ENCODE measurements at regions of chr16 and their contacts with region 1.

Region 1: GRCh38 chr16:67246934-67247697 is at the start of gene FHOD1:
- DNase-seq: peak; percentile 100
- ATAC-seq: peak; percentile 66
- H3K4me3 Mint-ChIP-seq: peak within 1 kb of the TSS; percentile 82
- H3K27ac Mint-ChIP-seq: peak within 1 kb of the TSS; percentile 90
- H3K4me1 Mint-ChIP-seq: peaks cover 43% of the 10 kb centered on the region
- H3K27me3 Mint-ChIP-seq: peaks cover 13% of the 10 kb centered on the region
- total RNA-seq, gene FHOD1: 92.2 to 92.8 TPM

Region 2: DNA sequence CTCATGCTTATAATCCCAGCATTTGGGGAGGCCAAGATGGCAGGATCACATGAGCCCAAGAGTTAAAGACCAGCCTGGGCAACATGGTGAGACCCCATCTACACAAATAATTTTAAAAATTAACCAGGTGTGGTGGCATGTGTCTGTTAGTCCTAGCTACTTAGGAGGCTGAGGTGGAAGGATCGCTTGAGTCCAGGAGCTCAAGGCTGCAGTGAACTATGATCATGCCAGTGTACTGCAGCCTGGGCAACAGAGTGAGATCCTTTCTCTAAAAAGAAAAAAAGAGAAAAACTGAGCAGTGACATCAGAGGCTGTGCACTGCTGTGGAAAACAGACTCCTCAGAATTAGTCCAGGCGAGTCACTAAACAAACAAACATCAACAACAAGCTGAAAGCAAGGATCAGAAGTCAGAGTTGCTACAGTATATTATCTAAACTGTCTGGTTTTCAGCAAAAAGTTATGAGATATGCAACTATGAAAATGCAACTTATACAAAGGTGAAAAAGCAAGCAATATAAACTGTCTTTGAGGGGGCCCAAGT is 178.8 kb before region 1 on chr16:
- POLR2A ChIA-PET with region 1: no interaction called
- DNase-seq: no peak
- ATAC-seq: no peak
- H3K4me3 Mint-ChIP-seq: no peak overlapping the region
- H3K27ac Mint-ChIP-seq: no peak overlapping the region
- H3K4me1 Mint-ChIP-seq: peaks cover 2% of the 10 kb centered on the region
- H3K27me3 Mint-ChIP-seq: no peaks in the 10 kb centered on the region

Region 3: GRCh38 chr16:67191995-67192681 is 55.0 kb before region 1 on chr16 and contains the start of gene E2F4:
- POLR2A ChIA-PET with region 1: interaction called, 11 read pairs
- DNase-seq: peak; percentile 90
- ATAC-seq: peak; percentile 91
- H3K4me3 Mint-ChIP-seq: peak within 1 kb of the TSS; percentile 95
- H3K27ac Mint-ChIP-seq: peak within 1 kb of the TSS; percentile 86
- H3K4me1 Mint-ChIP-seq: peaks cover 27% of the 10 kb centered on the region
- H3K27me3 Mint-ChIP-seq: no peaks in the 10 kb centered on the region
- total RNA-seq, gene E2F4: 105 to 114 TPM

Region 4: DNA sequence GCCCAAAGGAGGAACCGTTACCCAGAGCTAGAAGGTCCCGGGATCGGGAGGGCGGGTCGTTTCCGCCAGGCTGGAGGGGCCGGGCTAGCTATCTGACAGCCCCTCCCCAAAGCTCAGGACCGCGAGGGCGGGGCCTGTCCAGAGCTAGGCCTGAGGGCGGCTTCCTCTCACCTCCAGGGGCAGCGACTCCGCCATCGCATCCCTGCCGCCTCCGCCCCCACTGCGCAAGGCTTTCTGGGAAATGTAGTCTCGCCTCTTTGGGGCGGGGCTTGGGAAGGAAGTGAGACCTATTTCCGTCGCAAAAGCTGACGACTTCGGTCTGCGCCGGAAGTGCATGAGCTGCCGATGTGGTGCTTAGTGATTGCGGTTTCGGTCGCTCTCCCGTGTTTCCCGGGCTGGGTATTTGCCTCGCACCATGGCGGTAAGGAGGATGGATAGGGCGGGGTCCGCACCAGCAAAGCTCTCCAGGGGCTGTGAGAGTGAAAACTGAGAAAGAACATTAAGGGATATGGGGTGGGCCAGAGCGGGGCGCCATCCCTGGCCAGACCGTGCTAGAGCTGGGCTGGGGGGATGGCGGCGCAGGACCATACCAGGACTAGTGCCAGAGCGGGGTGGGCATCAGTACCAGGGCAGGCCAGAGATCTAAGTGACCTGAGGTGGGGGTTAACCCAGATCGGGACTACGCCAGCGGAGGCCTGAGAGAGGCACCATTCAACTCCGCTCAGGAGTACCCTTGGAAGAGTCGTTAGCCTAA is 20.1 kb before region 1 on chr16 and contains the start of gene TMEM208:
- POLR2A ChIA-PET with region 1: interaction called, 130 read pairs
- DNase-seq: peak; percentile 98
- ATAC-seq: peak; percentile 96
- H3K4me3 Mint-ChIP-seq: peak within 1 kb of the TSS; percentile 92
- H3K27ac Mint-ChIP-seq: peak within 1 kb of the TSS; percentile 92
- H3K4me1 Mint-ChIP-seq: peaks cover 31% of the 10 kb centered on the region
- H3K27me3 Mint-ChIP-seq: no peaks in the 10 kb centered on the region
- total RNA-seq, gene TMEM208: 30.3 to 30.5 TPM

Region 5: DNA sequence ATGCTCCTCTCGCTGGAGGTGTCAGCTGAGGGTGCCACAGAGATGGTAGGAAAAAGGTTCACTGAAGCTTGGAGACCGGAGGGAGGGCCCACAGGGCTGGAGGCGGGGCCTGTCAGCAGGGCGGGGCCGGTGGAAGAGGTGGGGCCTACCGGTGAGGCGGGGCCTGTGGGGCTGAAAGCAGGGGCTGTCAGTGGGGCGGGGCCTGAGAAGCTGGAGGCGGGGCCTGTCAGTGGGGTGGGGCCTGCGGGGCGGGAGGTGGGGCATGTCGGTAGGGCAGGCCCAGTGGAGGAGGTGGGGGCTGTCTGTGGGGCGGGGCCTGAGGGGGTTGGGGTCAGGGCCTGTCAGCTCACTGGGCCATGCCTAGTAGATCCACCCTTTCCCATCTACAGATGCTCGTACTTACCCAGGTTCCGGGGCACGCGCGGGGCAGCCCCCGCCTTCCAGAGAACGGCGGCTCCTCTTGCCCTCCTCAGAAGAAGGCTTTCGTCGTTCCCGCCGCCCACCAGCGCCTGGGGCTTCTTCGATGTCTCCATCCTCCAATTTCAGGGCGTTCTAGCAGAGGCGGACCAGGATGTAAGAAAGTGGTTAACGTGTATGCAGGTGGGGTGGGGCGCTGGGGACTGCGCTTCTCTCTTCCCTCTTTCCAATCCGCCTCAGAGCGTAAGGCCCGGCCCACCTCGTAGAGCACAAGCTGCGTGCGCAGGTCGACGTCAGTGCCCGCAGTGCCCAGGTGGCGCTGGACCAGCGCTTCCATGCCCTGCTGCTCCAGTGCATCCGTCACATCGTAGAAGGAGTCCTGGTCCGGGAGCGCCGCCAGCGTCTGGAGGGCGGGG is 10.3 kb before region 1 on chr16:
- POLR2A ChIA-PET with region 1: interaction called, 130 read pairs
- DNase-seq: peak; percentile 83
- ATAC-seq: peak; percentile 72
- H3K4me3 Mint-ChIP-seq: no peak overlapping the region
- H3K27ac Mint-ChIP-seq: peak overlapping the region; percentile 44
- H3K4me1 Mint-ChIP-seq: peaks cover 20% of the 10 kb centered on the region
- H3K27me3 Mint-ChIP-seq: no peaks in the 10 kb centered on the region

Region 6: DNA sequence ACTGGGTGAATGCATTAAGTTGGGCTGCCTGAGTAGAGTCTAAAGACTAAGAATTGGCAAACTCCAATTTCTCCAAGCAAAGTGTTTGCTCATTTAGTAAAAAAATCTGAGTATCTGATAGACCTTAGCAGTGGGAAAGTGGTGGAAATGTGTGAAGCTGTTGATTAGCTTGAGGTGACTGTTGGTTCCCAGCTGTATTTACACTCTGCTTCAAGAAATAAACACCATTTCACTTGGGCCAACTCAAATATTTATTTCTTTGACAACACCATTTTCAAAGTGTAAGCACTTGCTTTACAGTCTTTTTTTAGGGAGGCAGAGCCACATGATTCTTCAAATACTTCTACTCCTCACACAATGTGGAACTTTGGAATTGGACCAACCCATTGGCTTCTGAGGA is 70.7 kb after region 1 on chr16:
- POLR2A ChIA-PET with region 1: no interaction called
- DNase-seq: no peak
- ATAC-seq: no peak
- H3K4me3 Mint-ChIP-seq: no peak overlapping the region
- H3K27ac Mint-ChIP-seq: no peak overlapping the region
- H3K4me1 Mint-ChIP-seq: no peaks in the 10 kb centered on the region
- H3K27me3 Mint-ChIP-seq: peaks cover 33% of the 10 kb centered on the region

Region 7: GRCh38 chr16:67329901-67330300 is 82.8 kb after region 1 on chr16:
- POLR2A ChIA-PET with region 1: no interaction called
- DNase-seq: no peak
- ATAC-seq: no peak
- H3K4me3 Mint-ChIP-seq: no peak overlapping the region
- H3K27ac Mint-ChIP-seq: no peak overlapping the region
- H3K4me1 Mint-ChIP-seq: peaks cover 9% of the 10 kb centered on the region
- H3K27me3 Mint-ChIP-seq: peaks cover 31% of the 10 kb centered on the region

Measured in activated naive CD8-positive, alpha-beta T cell treated with anti-CD3 and anti-CD28 coated beads, Interleukin-2, amount 10 ng/mL, durations not matched to agents 7 days and 5 days (primary cell).